ENCODE measurements at regions of chr9 and their contacts with region 1.

Region 1: GRCh38 chr9:125706661-125707471 is at the start of gene MAPKAP1:
- DNase-seq: peak; percentile 91
- ATAC-seq: peak; percentile 100
- H3K4me3 ChIP-seq: peak within 1 kb of the TSS; percentile 89 to 97 (median 90)
- H3K27ac ChIP-seq: peak within 1 kb of the TSS; percentile 64
- H3K4me1 ChIP-seq: peaks cover 37% of the 10 kb centered on the region
- H3K27me3 ChIP-seq: no peaks in the 10 kb centered on the region
- CTCF ChIP-seq: no peak
- EP300 ChIP-seq: no peak
- POLR2A ChIP-seq: peak; percentile 71 to 91
- RAD21 ChIP-seq: no peak
- total RNA-seq, gene MAPKAP1: 63.3 and 64.3 TPM in 2 replicates

Region 2: DNA sequence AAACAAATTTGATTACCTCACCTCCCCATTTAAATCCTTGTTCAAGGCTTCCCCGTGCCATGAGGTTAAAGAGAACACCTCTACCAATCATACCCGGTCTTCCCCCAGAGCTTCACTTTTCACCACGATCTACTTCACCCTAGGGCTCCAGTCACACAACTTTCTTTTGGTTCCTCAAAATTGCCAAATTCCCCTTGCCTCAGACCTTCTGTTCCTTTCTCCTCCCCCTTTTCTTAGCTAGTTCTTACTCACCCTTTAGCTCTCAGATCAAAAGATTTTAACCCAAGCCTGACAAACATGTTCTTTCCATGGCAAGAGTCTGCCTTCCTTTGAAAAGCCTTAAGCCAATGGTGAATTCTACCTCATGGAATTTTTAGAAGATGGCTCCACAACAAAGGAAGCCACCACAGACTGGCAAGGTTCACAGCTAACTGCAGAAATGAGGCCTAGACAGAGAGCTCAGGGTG is 56.6 kb before region 1 on chr9:
- CTCF ChIA-PET with region 1: no interaction called
- POLR2A ChIA-PET with region 1: no interaction called
- in situ Hi-C with region 1: no loop called
- intact Hi-C with region 1: loop called (anchors 10 kb)
- DNase-seq: no peak
- ATAC-seq: no peak
- H3K4me3 ChIP-seq: no peak overlapping the region
- H3K27ac ChIP-seq: no peak overlapping the region
- H3K4me1 ChIP-seq: 0 out of 2 replicates have a peak, but pooled peaks cover 5% of the 10 kb centered on the region
- H3K27me3 ChIP-seq: no peaks in the 10 kb centered on the region
- CTCF ChIP-seq: no peak
- EP300 ChIP-seq: no peak
- POLR2A ChIP-seq: no peak
- RAD21 ChIP-seq: no peak

Region 3: DNA sequence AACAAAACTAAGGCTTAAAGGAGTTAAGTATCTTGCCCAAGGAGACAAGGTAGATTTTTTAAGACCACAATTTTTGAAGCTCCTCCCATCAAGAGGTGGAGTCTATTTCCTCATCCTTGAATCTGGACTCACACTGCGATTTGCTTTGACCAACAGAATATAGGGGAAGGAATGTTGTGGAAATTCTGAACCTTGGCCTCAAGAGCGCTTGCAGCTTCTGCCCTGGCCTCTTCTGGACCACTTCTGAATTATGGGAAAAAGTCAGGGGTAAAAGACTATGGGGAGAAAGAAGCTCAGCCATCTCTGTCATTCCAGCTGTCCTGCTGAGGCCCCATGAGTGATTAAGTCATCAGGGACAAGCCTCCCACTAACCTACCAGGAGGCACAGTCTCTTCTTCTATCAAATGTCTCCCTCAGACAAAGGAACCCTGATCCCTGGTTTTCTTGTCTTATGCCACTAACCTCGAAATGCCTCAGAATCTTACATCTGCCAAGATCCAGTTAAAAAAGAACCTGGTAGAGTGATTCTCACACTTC is 25.7 kb before region 1 on chr9:
- CTCF ChIA-PET with region 1: no interaction called
- POLR2A ChIA-PET with region 1: interaction called, 15 read pairs
- in situ Hi-C with region 1: no loop called
- intact Hi-C with region 1: no loop called
- DNase-seq: peak; percentile 53
- ATAC-seq: peak; percentile 74
- H3K4me3 ChIP-seq: no peak overlapping the region; a peak in 2 of 6 replicates
- H3K27ac ChIP-seq: no peak overlapping the region
- H3K4me1 ChIP-seq: peaks cover 21% of the 10 kb centered on the region
- H3K27me3 ChIP-seq: no peaks in the 10 kb centered on the region
- CTCF ChIP-seq: no peak
- EP300 ChIP-seq: no peak
- POLR2A ChIP-seq: no peak
- RAD21 ChIP-seq: no peak

Region 4: GRCh38 chr9:125694478-125694877 is 12.4 kb before region 1 on chr9:
- CTCF ChIA-PET with region 1: no interaction called
- POLR2A ChIA-PET with region 1: interaction called, 16 read pairs
- in situ Hi-C with region 1: no loop called
- intact Hi-C with region 1: no loop called
- DNase-seq: peak; percentile 74
- ATAC-seq: peak; percentile 51; the same call in 2 of the 3 replicates
- H3K4me3 ChIP-seq: no peak overlapping the region
- H3K27ac ChIP-seq: no peak overlapping the region
- H3K4me1 ChIP-seq: peaks cover 30% of the 10 kb centered on the region
- H3K27me3 ChIP-seq: no peaks in the 10 kb centered on the region
- CTCF ChIP-seq: no peak
- EP300 ChIP-seq: no peak
- POLR2A ChIP-seq: no peak
- RAD21 ChIP-seq: no peak

Region 5: GRCh38 chr9:125746017-125746773 is 39.3 kb after region 1 on chr9:
- CTCF ChIA-PET with region 1: no interaction called
- POLR2A ChIA-PET with region 1: interaction called, 10 read pairs
- in situ Hi-C with region 1: no loop called
- intact Hi-C with region 1: loop called (anchors 5 kb)
- DNase-seq: peak; percentile 89
- ATAC-seq: peak; percentile 92
- H3K4me3 ChIP-seq: peak overlapping the region; percentile 55 to 85 (median 82)
- H3K27ac ChIP-seq: peak overlapping the region; percentile 55
- H3K4me1 ChIP-seq: peaks cover 43% of the 10 kb centered on the region
- H3K27me3 ChIP-seq: 0 out of 5 replicates have a peak, but pooled peaks cover 0 to 3% of the 10 kb centered on the region in 2 experiments
- CTCF ChIP-seq: no peak
- EP300 ChIP-seq: no peak
- POLR2A ChIP-seq: peak in 1 of 2 experiments; percentile 57; a peak in 2 of 4 replicates
- RAD21 ChIP-seq: 0 out of 2 replicates have a peak, but pooled peaks have one; percentile 8

Region 6: DNA sequence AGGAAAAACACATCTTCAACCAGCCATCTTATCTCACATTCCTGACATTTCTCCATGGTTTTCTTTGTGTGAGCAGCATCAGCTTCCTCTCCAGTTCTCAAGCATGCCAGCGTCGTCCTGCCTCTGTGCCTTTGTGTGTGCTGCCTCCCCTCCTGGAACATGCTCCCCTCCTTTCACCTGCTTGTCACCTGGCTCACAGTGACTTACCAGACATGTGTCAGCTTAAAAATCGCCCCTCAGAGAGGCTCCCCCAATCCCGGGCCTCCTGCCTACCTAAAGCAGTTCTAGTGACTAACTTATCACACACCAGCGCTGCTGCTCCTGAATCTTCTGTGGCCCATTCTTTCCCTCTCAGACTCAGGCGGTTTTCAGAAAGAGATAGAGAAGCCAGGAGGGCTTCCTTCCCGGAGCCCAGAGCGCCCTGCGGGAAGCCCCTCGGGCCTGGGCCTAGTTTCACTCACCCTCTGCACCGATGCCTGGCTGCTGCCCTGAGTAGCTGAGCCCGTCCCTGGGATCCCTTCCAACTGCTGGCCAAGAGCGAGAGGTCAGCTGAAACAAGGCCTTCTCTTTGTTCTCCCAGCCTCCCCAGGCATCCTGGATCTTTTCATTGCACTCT is 568.6 kb after region 1 on chr9:
- CTCF ChIA-PET with region 1: no interaction called
- POLR2A ChIA-PET with region 1: no interaction called
- in situ Hi-C with region 1: no loop called
- intact Hi-C with region 1: no loop called
- DNase-seq: no peak
- ATAC-seq: peak; percentile 79
- H3K4me3 ChIP-seq: no peak overlapping the region
- H3K27ac ChIP-seq: no peak overlapping the region
- H3K4me1 ChIP-seq: no peaks in the 10 kb centered on the region
- H3K27me3 ChIP-seq: peaks cover 1 to 22% of the 10 kb centered on the region in 2 experiments; a peak in 4 of 5 replicates
- CTCF ChIP-seq: no peak
- EP300 ChIP-seq: no peak
- POLR2A ChIP-seq: no peak
- RAD21 ChIP-seq: no peak